GM10248 (cell line): ENCODE measurements at regions of chr6 and their contacts with region 1.

Region 1: GRCh38 chr6:15441215-15441868 is 195.5 kb downstream of the JARID2 start:
- DNase-seq: peak; percentile 57
- CTCF ChIP-seq: peak; percentile 72

Region 2: GRCh38 chr6:15409301-15410125 is 31.8 kb before region 1 on chr6:
- CTCF ChIA-PET with region 1: interaction called, 21 read pairs
- POLR2A ChIA-PET with region 1: no interaction called
- DNase-seq: no peak
- CTCF ChIP-seq: no peak

Region 3: DNA sequence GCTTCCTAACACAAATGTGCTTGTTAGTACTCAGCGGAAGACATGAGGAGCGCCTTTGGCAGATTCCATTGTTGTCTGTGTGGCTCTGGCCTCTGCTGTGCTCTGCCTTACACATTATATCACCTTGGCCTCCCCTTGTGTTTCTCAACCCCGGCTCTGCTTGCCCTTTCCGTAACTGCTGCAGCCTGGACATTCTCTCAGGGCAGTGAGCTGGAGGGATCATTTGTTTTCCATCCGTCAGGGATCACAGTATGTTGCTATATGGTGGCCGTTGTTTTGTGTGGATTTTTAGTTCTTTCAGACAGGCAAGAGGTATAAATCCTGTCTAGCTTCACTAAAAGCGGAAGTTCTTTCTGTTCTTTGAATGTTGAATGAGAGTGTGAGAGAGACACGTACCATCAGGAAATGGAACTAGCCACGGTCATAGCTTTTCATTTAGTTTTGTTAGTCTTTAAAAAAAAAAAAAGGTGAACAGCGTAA is 20.3 kb before region 1 on chr6:
- CTCF ChIA-PET with region 1: interaction called, 12 read pairs
- POLR2A ChIA-PET with region 1: no interaction called
- DNase-seq: peak; percentile 69
- CTCF ChIP-seq: no peak

Region 4: GRCh38 chr6:15427331-15428070 is 13.8 kb before region 1 on chr6:
- CTCF ChIA-PET with region 1: interaction called, 26 read pairs
- POLR2A ChIA-PET with region 1: no interaction called
- DNase-seq: no peak
- CTCF ChIP-seq: no peak

Region 5: GRCh38 chr6:15464211-15464725 is 22.9 kb after region 1 on chr6:
- CTCF ChIA-PET with region 1: interaction called, 11 read pairs
- POLR2A ChIA-PET with region 1: no interaction called
- DNase-seq: peak; percentile 51
- CTCF ChIP-seq: peak; percentile 64

Region 6: GRCh38 chr6:15476631-15477380 is 35.5 kb after region 1 on chr6:
- CTCF ChIA-PET with region 1: interaction called, 11 read pairs
- POLR2A ChIA-PET with region 1: no interaction called
- DNase-seq: no peak
- CTCF ChIP-seq: no peak